ENCODE measurements at regions of chr11 and their contacts with region 1.

Region 1: GRCh38 chr11:506238-506994 is 626 bp downstream of the RNH1 start:
- DNase-seq: peak; percentile 98
- H3K4me3 Mint-ChIP-seq: peak overlapping the region; percentile 97
- H3K27ac Mint-ChIP-seq: peak overlapping the region; percentile 100
- H3K4me1 Mint-ChIP-seq: peaks cover 27% of the 10 kb centered on the region
- H3K27me3 Mint-ChIP-seq: no peaks in the 10 kb centered on the region

Region 2: GRCh38 chr11:406978-407739 is 99.3 kb before region 1 on chr11:
- CTCF ChIA-PET with region 1: no interaction called
- POLR2A ChIA-PET with region 1: interaction called, 6 read pairs
- intact Hi-C with region 1: loop called (anchors 2 kb)
- DNase-seq: peak; percentile 94
- H3K4me3 Mint-ChIP-seq: peak overlapping the region; percentile 46
- H3K27ac Mint-ChIP-seq: no peak overlapping the region
- H3K4me1 Mint-ChIP-seq: peaks cover 5% of the 10 kb centered on the region
- H3K27me3 Mint-ChIP-seq: no peaks in the 10 kb centered on the region

Region 3: GRCh38 chr11:447923-448731 is 58.3 kb before region 1 on chr11:
- CTCF ChIA-PET with region 1: interaction called, 9 read pairs
- POLR2A ChIA-PET with region 1: interaction called, 22 read pairs
- intact Hi-C with region 1: loop called (anchors 1 kb)
- DNase-seq: peak; percentile 97
- H3K4me3 Mint-ChIP-seq: peak overlapping the region; percentile 90
- H3K27ac Mint-ChIP-seq: peak overlapping the region; percentile 95
- H3K4me1 Mint-ChIP-seq: peaks cover 21% of the 10 kb centered on the region
- H3K27me3 Mint-ChIP-seq: peaks cover 2% of the 10 kb centered on the region

Region 4: DNA sequence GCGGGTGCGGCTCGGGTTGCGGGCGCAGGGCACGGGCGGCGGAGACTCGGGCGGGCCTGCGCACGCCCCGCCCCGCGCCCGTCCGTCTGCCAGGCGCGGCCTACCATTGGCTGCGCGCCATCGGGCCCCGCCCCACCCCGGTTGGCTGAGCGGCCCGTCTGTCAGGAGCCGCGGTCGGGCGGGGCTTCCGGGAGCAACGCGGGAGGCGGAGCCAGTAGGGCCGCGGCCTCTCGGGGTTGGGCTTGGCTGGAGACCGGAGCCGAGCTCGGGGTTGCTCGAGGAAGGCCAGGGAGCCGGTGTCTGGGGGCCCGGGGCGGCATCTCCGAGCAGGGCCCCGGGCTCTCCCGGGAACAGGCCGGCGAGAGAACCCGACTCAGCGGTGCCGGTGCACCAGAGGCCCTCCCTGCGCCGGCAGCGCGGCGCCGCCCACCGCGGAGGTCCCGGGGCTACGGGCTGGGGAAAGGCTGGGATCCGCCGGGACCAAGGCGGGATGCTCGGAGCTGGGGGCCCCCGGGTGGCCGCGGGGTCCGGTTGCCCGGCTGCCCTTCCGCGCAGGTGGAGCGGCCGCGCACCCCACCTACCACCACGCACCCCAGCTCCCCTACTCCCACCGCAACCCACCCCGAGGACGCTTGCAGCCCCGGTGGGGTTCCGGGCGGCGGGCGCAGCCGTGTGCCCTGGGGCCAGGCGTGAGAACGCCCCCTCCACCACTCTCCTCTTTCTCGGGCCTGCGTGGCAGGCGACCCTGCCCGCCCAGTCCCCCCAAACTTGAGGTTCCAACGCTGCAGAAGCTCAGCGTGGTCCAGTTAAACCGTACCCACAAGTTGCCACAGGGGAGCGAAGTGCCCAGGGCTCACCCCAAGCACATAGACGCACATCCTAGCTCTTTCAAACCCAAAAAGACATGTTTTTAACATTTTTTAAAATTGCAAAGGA is 29.4 kb after region 1 on chr11 and contains the start of gene HRAS:
- CTCF ChIA-PET with region 1: no interaction called
- POLR2A ChIA-PET with region 1: interaction called, 7 read pairs
- intact Hi-C with region 1: loop called (anchors 1 kb)
- DNase-seq: peak; percentile 95
- H3K4me3 Mint-ChIP-seq: peak within 1 kb of the TSS; percentile 85
- H3K27ac Mint-ChIP-seq: peak within 1 kb of the TSS; percentile 78
- H3K4me1 Mint-ChIP-seq: peaks cover 9% of the 10 kb centered on the region
- H3K27me3 Mint-ChIP-seq: no peaks in the 10 kb centered on the region
- total RNA-seq, gene HRAS: 39.8 to 42.0 TPM